ENCODE measurements at regions of chr2 and their contacts with region 1.

Region 1: DNA sequence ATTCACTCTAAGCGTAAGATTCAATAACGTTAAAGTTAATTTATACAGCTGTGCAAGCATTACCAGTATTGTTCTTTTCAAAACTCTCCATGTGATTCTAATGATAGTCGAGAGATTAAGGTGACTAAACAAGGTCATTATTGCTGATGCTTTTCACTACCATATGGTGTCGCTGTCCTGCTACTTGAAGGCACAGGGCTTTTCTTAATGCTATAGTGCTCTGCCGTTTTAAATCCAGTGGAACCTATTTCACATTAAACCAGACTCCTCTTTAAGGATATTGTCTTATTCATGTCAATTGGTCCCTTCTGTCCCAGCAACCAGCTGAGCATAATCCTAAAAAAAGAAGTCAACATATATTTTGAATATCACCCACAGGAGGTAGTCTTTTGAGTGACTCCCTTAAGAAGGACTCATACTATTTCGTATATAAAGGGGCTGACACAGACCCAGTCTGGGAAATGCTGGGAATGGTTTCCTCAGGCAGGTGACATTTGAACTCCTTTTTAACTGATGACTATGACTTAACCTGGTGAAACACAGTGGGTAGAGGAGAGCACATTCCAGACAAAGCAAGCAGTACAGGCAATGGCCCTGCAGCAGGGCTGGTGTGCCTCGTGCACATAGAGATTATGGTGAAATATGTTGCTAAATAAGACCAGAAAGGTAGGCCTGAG is 53.9 kb upstream of the CYTIP start:
- DNase-seq: peak; percentile 23
- ATAC-seq: peak; percentile 94
- H3K4me3 Mint-ChIP-seq: no peak overlapping the region
- H3K27ac Mint-ChIP-seq: no peak overlapping the region
- H3K4me1 Mint-ChIP-seq: peaks cover 43% of the 10 kb centered on the region
- H3K27me3 Mint-ChIP-seq: no peaks in the 10 kb centered on the region

Region 2: GRCh38 chr2:157427003-157427921 is 70.5 kb before region 1 on chr2:
- CTCF ChIA-PET with region 1: no interaction called
- POLR2A ChIA-PET with region 1: no interaction called
- intact Hi-C with region 1: no loop called
- DNase-seq: no peak
- ATAC-seq: peak; percentile 23
- H3K4me3 Mint-ChIP-seq: peak overlapping the region; percentile 93
- H3K27ac Mint-ChIP-seq: peak overlapping the region; percentile 95
- H3K4me1 Mint-ChIP-seq: peaks cover 81% of the 10 kb centered on the region
- H3K27me3 Mint-ChIP-seq: no peaks in the 10 kb centered on the region

Region 3: GRCh38 chr2:157480182-157480961 is 17.4 kb before region 1 on chr2:
- CTCF ChIA-PET with region 1: interaction called, 29 read pairs
- POLR2A ChIA-PET with region 1: no interaction called
- intact Hi-C with region 1: no loop called
- DNase-seq: peak; percentile 81
- ATAC-seq: peak; percentile 71
- H3K4me3 Mint-ChIP-seq: peak overlapping the region; percentile 64
- H3K27ac Mint-ChIP-seq: peak overlapping the region; percentile 95
- H3K4me1 Mint-ChIP-seq: peaks cover 86% of the 10 kb centered on the region
- H3K27me3 Mint-ChIP-seq: no peaks in the 10 kb centered on the region

Region 4: DNA sequence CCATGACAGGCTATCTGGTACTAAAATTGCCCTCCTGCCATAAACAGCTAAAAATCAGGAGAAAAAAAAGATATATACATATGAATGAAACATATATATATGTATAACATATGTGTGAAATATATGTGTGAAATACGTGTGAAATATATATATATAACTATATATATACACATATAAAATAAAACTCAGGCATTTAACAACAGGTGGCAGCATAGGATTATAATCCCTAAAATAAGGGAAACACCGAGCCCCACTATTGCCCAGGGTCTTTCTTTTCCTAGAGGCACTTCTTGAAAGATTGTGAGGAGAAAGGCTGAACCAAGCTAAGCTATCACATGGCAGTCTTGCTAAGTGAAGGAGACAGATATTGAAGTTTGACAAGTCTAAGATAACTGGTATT is 12.0 kb after region 1 on chr2:
- CTCF ChIA-PET with region 1: interaction called, 14 read pairs
- POLR2A ChIA-PET with region 1: no interaction called
- intact Hi-C with region 1: no loop called
- DNase-seq: no peak
- ATAC-seq: no peak
- H3K4me3 Mint-ChIP-seq: no peak overlapping the region
- H3K27ac Mint-ChIP-seq: no peak overlapping the region
- H3K4me1 Mint-ChIP-seq: peaks cover 4% of the 10 kb centered on the region
- H3K27me3 Mint-ChIP-seq: peaks cover 5% of the 10 kb centered on the region

Region 5: DNA sequence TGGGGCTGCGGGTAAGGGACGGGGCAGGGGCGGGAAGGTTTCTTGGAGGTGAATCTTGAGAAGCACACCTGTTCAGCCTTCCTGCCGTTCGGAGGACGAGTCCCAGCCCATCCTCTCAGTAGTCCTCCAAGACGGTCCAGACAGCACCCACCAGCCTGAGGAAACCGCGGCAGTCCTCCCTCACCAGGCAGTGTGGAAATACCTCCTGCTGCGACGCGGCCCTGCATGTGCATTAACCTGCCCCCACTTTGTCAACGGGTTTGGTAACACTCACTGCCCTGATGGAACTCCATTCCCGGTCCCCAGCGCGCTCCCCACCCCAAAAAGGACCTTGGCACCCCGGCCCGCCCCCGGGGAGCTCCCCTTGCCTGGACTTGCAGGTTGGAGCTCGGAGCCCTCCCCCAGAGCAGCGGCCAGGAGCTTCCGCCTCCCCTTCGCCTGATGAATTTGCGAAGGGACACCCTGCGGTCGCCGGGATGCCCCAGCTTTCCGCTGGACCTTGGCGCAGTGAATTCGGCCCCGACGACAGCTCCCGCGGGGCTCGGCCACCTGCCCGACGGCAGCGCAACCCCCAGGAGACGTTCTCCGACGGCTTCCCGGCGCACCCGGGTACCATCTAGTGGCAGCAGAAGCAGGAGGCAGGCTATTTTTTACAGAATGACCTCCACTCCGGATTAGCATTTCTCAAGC is 99.4 kb after region 1 on chr2:
- CTCF ChIA-PET with region 1: interaction called, 13 read pairs
- POLR2A ChIA-PET with region 1: no interaction called
- intact Hi-C with region 1: loop called (anchors 1 to 2 kb)
- DNase-seq: peak; percentile 81
- ATAC-seq: peak; percentile 88
- H3K4me3 Mint-ChIP-seq: peak overlapping the region; percentile 59
- H3K27ac Mint-ChIP-seq: no peak overlapping the region
- H3K4me1 Mint-ChIP-seq: peaks cover 8% of the 10 kb centered on the region
- H3K27me3 Mint-ChIP-seq: peaks cover 5% of the 10 kb centered on the region

Region 6: DNA sequence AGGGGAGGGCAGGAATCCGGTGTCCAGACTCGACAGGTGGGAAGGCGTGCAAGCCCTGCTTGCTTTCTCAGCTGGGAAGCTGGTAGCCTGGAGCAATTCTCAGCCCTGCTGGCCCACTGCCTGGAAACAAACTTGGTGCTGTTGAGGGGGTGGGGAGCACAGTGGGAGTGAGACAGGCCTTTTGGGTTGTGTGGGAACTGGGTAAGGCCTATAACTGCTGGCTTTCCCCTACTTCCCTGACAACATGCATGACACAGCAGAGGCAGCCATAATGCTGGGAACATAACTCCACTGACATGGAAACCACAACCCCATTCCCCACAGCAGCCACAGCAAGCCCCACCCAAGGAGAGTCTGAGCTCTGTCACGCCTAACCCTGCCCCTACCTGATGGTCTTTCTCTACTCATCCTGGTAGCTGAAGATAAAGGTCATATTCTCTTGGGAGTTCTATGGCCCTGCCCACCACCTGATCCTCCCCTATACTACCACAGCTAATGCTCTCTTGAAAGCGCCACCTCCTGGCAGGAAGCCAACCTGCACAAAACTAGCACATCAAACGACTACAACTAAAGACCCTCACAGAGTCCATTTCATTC is 253.8 kb after region 1 on chr2:
- CTCF ChIA-PET with region 1: interaction called, 7 read pairs
- POLR2A ChIA-PET with region 1: no interaction called
- intact Hi-C with region 1: loop called (anchors 5 kb)
- DNase-seq: peak; percentile 47
- ATAC-seq: peak; percentile 44
- H3K4me3 Mint-ChIP-seq: no peak overlapping the region
- H3K27ac Mint-ChIP-seq: no peak overlapping the region
- H3K4me1 Mint-ChIP-seq: peaks cover 10% of the 10 kb centered on the region
- H3K27me3 Mint-ChIP-seq: no peaks in the 10 kb centered on the region

Region 7: DNA sequence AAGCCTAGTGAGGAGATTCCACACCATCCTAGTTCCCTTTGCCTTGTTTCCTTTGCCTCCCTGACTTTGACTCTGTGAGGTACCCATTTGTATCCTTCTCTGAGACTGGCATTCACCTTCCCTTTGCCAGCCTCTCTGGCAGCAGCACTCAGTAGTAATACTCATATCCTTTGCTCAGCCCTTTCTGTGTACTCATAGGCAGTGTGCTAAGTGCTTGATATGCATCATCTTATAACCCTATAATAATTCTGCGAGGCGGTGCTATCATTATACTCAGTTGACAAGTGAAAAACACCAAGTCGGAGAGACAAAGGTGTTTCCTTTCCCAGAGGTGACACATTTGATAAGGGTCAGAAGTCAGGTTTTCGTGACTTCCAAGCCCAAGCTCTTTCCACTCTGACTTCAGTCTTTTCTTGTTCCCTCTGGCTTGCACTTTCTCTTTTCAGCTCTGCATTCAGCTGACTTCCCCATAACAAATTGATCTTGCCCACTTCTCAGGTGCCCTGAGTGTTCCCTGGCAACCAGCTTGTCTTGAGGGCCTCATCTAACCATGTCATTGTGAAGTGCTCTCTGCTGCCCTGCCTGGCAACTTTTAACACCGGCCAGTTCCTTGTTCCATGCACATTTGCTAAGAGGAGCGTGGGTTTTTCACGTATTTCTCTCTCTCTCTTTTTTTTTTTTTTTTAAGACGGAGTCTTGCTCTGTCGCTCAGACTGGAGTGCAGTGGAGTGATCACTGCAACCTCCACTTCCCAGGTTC is 509.4 kb after region 1 on chr2:
- CTCF ChIA-PET with region 1: interaction called, 8 read pairs
- POLR2A ChIA-PET with region 1: no interaction called
- intact Hi-C with region 1: loop called (anchors 1 kb)
- DNase-seq: peak; percentile 44
- ATAC-seq: peak; percentile 82
- H3K4me3 Mint-ChIP-seq: no peak overlapping the region
- H3K27ac Mint-ChIP-seq: no peak overlapping the region
- H3K4me1 Mint-ChIP-seq: peaks cover 18% of the 10 kb centered on the region
- H3K27me3 Mint-ChIP-seq: peaks cover 6% of the 10 kb centered on the region

Region 8: GRCh38 chr2:158154586-158154985 is 656.8 kb after region 1 on chr2:
- CTCF ChIA-PET with region 1: no interaction called
- POLR2A ChIA-PET with region 1: no interaction called
- intact Hi-C with region 1: no loop called
- DNase-seq: no peak
- ATAC-seq: no peak
- H3K4me3 Mint-ChIP-seq: no peak overlapping the region
- H3K27ac Mint-ChIP-seq: no peak overlapping the region
- H3K4me1 Mint-ChIP-seq: no peaks in the 10 kb centered on the region
- H3K27me3 Mint-ChIP-seq: peaks cover 7% of the 10 kb centered on the region

Region 9: GRCh38 chr2:158753641-158754611 is 1256.2 kb after region 1 on chr2:
- CTCF ChIA-PET with region 1: no interaction called
- POLR2A ChIA-PET with region 1: no interaction called
- intact Hi-C with region 1: loop called (anchors 5 to 10 kb)
- DNase-seq: peak; percentile 44
- ATAC-seq: peak; percentile 63
- H3K4me3 Mint-ChIP-seq: no peak overlapping the region
- H3K27ac Mint-ChIP-seq: no peak overlapping the region
- H3K4me1 Mint-ChIP-seq: peaks cover 3% of the 10 kb centered on the region
- H3K27me3 Mint-ChIP-seq: peaks cover 11% of the 10 kb centered on the region